Tibial artery (tissue), 4 donors: ENCODE measurements at regions of chr20 and their contacts with region 1.

Region 1: DNA sequence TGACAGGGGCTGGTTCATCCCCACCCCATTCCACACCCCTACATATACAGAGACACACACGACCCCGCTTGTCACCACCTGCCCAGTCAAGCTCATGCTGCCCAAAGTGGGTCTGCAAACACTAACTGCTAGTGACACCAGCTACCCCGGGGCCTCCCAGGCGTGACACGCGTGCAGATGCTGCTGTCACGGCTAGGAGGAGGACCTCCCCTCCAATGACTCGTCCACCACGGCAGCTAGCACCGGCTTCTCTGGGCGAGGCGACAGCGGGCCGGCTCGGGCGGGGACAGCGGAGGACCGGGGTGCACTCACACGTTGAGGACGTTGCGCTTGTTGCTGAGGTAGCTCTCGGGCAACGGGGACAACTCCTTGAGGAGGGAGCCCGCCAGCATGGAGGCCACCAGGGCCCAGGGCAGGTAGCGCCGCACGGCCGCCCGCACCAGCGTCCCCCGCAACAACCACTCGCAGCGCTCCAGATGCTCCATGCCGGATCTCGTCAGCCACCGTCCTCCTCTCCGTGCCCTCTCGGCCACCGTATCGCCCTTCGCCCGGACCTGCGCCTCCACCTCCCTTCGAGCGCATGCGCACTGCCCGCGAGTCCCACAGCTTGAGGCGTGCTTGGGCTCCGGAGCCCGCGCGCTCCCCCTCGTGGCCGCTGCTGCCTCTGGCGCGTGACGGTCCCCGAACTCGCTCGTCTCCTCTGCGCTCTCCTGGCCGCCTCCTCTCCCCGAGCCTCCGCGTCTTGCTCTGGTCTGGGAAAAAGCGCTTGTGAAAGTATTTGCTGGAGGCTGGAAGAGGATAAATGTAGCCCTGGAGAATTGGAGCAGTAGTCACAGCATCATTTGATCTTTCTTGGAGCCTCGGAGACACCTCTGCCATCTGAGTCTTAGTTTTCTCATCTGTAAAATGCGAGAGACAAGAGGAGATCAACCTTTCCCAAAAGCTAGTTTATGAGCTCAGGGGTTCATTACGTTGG is at the start of gene FITM2:
- DNase-seq: peak; percentile 98 to 99
- H3K4me3 ChIP-seq: peak within 1 kb of the TSS; percentile 78 to 95
- H3K27ac ChIP-seq: peak within 1 kb of the TSS; percentile 69 to 70
- H3K4me1 ChIP-seq: peaks cover 0 to 23% (median 16%) of the 10 kb centered on the region in 4 donors
- H3K27me3 ChIP-seq: no peaks in the 10 kb centered on the region
- CTCF ChIP-seq: peak; percentile 96 to 98

Region 2: GRCh38 chr20:44115762-44116644 is 194.9 kb before region 1 on chr20:
- intact Hi-C with region 1: loop called (anchors 5 kb)
- DNase-seq: no peak
- H3K4me3 ChIP-seq: no peak overlapping the region
- H3K27ac ChIP-seq: peak overlapping the region; percentile 7 to 59
- H3K4me1 ChIP-seq: peaks cover 0 to 85% (median 28%) of the 10 kb centered on the region in 4 donors
- H3K27me3 ChIP-seq: no peaks in the 10 kb centered on the region
- CTCF ChIP-seq: no peak

Region 3: DNA sequence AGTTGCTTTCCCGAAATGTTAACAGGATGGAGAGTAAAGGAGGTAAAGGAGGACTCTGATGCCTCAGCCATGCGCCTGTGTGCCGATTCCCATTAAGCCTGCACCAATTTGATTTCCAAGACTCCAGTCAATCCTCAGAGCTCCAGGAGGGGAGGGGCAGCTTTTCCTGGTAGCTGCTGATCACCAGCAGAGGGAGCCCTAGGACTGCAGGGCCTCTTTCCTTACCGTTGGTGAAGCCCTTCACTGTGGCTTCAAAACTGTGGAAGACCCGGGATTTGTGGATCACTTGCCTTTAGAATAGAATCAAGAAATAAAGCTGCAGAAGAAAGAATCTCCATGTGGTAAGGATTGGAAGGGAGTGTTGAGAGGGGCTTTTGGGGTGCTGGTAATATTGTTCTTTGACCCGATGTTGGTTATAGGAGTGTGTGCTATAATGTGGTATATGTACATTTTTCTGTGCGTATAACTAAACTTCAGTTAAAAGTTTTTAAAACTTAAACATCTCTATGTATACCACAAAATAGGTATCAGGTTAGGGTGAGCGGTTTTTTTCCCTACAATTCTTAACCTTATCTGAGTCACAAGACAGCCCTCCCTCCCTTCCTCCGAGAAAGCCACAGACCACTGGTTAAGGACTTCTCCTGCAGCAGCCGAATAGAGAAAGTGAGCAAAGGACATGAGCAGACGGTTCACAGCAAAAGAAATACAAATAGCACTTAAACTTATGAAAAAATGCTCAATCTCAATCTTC is 93.4 kb before region 1 on chr20:
- intact Hi-C with region 1: loop called (anchors 2 kb)
- DNase-seq: peak in 1 of 2 donors; percentile 41
- H3K4me3 ChIP-seq: no peak overlapping the region
- H3K27ac ChIP-seq: no peak overlapping the region
- H3K4me1 ChIP-seq: peaks cover 0 to 12% (median 2%) of the 10 kb centered on the region in 4 donors
- H3K27me3 ChIP-seq: no peaks in the 10 kb centered on the region
- CTCF ChIP-seq: peak; percentile 58 to 59